SK-N-SH (cell line): ENCODE measurements at regions of chr10 and their contacts with region 1.

Region 1: DNA sequence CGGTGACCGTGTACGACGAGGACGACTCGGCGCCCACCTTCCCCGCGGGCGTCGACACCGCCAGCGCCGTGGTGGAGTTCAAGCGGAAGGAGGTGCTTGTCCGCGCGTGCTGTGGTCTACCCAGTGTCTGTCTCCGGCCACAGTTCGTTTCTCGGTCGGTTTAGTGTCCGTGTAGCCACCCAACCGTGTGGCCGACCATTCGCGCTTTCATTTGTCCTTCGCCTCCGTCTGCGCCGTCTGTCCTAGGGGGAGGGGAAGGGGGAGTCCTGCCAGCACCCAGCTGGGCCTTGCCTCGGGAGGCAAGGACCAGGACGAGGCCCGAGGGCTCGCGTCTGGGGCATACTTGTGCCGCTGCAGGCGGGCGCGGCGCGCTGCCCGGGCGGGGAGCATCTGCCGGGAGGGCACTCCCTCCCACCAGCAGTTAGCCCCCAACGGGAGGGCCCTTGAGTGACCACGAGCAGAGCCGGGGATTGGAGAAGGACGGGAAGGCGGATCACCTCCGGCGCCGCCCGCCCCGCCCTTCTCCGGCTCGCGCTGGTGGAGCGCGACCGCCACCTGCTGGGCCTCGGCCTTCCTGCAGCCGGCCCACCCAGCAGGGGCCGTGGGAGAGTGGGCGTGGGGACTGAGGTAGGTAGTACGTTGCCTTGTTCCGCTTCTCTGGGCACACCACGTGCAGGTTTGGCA is 28.4 kb downstream of the RET start:
- DNase-seq: peak; percentile 95
- H3K4me3 ChIP-seq: peak overlapping the region; percentile 27 to 48; a peak in 2 of 4 replicates
- H3K27ac ChIP-seq: peak overlapping the region in 1 of 2 experiments; percentile 51; a peak in 1 of 4 replicates
- H3K4me1 ChIP-seq: peaks cover 0 to 63% of the 10 kb centered on the region in 2 experiments; a peak in 1 of 4 replicates
- H3K27me3 ChIP-seq: no peaks in the 10 kb centered on the region
- CTCF ChIP-seq: peak; percentile 91
- EP300 ChIP-seq: no peak
- RAD21 ChIP-seq: peak; percentile 86

Region 2: DNA sequence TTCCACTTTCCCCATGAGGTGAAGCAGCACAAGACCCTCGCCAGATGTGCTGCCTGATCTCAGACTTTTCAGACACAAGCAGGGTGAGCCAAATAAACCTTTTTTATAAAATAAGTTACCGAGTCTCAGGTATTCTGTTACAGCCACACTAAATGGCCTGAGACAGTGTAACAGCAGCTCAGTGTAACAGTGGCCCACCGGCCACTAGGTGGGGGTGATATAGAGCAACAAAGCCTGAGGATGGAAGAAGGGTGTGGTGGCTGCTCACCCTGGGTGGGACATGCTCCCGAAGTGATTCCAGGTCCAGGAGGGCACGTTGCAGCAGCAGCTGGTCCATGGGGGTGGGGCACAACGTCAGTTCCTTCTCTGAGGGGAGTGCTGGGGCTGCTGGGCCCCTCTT is 278.0 kb before region 1 on chr10:
- CTCF ChIA-PET with region 1: no interaction called
- POLR2A ChIA-PET with region 1: no interaction called
- DNase-seq: peak; percentile 20
- H3K4me3 ChIP-seq: no peak overlapping the region
- H3K27ac ChIP-seq: no peak overlapping the region
- H3K4me1 ChIP-seq: no peaks in the 10 kb centered on the region
- H3K27me3 ChIP-seq: no peaks in the 10 kb centered on the region
- CTCF ChIP-seq: no peak
- EP300 ChIP-seq: no peak
- RAD21 ChIP-seq: no peak

Region 3: GRCh38 chr10:42866115-42866995 is 238.9 kb before region 1 on chr10:
- CTCF ChIA-PET with region 1: interaction called, 32 read pairs
- POLR2A ChIA-PET with region 1: no interaction called
- DNase-seq: peak; percentile 92
- H3K4me3 ChIP-seq: no peak overlapping the region
- H3K27ac ChIP-seq: peak overlapping the region in 1 of 2 experiments; percentile 74; a peak in 2 of 4 replicates
- H3K4me1 ChIP-seq: peaks cover 0 to 43% of the 10 kb centered on the region in 2 experiments; a peak in 2 of 4 replicates
- H3K27me3 ChIP-seq: no peaks in the 10 kb centered on the region
- CTCF ChIP-seq: peak; percentile 67
- EP300 ChIP-seq: no peak
- RAD21 ChIP-seq: peak; percentile 89

Region 4: GRCh38 chr10:42872865-42873643 is 232.2 kb before region 1 on chr10:
- CTCF ChIA-PET with region 1: interaction called, 10 read pairs
- POLR2A ChIA-PET with region 1: no interaction called
- DNase-seq: no peak
- H3K4me3 ChIP-seq: no peak overlapping the region
- H3K27ac ChIP-seq: peak overlapping the region in 1 of 2 experiments; percentile 99; a peak in 2 of 4 replicates
- H3K4me1 ChIP-seq: peaks cover 0 to 90% of the 10 kb centered on the region in 2 experiments; a peak in 2 of 4 replicates
- H3K27me3 ChIP-seq: no peaks in the 10 kb centered on the region
- CTCF ChIP-seq: no peak
- EP300 ChIP-seq: no peak
- RAD21 ChIP-seq: no peak

Region 5: GRCh38 chr10:43086321-43086942 is 18.8 kb before region 1 on chr10:
- CTCF ChIA-PET with region 1: interaction called, 8 read pairs
- POLR2A ChIA-PET with region 1: interaction called, 12 read pairs
- DNase-seq: peak; percentile 72
- H3K4me3 ChIP-seq: no peak overlapping the region; a peak in 1 of 4 replicates
- H3K27ac ChIP-seq: peak overlapping the region in 1 of 2 experiments; percentile 96; a peak in 2 of 4 replicates
- H3K4me1 ChIP-seq: peaks cover 0 to 95% of the 10 kb centered on the region in 2 experiments; a peak in 2 of 4 replicates
- H3K27me3 ChIP-seq: no peaks in the 10 kb centered on the region; the same call in 1 of the 2 replicates
- CTCF ChIP-seq: no peak
- EP300 ChIP-seq: peak in 1 of 2 experiments; percentile 85; a peak in 1 of 4 replicates
- RAD21 ChIP-seq: no peak

Region 6: DNA sequence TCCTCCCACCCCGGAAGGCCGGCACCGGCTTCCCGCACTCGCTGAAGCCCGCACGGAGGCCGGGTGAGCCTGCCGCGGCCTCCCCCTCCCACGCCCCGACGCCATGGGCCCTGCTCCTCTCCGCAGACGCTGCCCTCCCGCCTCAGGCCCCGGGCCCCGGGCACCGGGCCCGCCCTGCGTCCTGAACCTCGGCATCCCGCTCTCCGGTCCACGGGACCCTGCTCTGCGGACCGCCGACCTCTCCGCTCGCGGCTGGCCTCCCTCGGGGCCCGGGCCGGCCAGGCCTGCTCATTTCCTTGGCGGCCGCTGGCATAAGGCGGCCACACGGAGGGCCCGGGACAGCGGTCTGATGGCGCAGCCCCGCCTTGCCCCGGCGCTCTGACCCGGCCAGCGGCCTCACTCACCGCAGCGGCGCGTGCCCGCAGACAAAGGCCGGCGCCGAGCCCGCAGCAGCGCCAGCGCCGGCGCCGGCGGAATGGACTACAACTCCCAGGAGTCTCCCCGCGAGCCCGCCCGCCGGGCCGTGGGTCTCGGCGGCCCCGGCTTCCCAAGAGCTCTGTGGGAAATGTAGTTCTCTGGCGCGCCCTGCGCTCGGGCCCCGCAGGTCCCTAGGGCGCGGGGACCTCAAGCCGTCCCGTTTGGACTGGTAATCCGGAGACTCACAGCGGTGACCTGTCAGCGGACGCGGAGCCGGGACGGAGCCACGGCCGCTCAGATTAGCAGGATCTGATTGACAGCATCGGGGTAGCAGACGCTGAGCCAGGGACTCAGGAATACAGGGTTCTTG is 543.3 kb after region 1 on chr10 and contains the start of gene ZNF32:
- CTCF ChIA-PET with region 1: no interaction called
- POLR2A ChIA-PET with region 1: no interaction called
- DNase-seq: peak; percentile 96
- H3K4me3 ChIP-seq: peak within 1 kb of the TSS; percentile 64 to 79
- H3K27ac ChIP-seq: peak within 1 kb of the TSS; percentile 2 to 76; a peak in 1 of 4 replicates
- H3K4me1 ChIP-seq: peaks cover under 1 to 3% of the 10 kb centered on the region in 2 experiments; a peak in 2 of 4 replicates
- H3K27me3 ChIP-seq: no peaks in the 10 kb centered on the region
- CTCF ChIP-seq: no peak
- EP300 ChIP-seq: no peak
- RAD21 ChIP-seq: no peak
- polyA plus RNA-seq, gene ZNF32: 27.2 and 39.0 TPM in 2 replicates